Left ventricle myocardium superior (tissue), 1 donor: ENCODE measurements at regions of chr15 and their contacts with region 1.

Region 1: DNA sequence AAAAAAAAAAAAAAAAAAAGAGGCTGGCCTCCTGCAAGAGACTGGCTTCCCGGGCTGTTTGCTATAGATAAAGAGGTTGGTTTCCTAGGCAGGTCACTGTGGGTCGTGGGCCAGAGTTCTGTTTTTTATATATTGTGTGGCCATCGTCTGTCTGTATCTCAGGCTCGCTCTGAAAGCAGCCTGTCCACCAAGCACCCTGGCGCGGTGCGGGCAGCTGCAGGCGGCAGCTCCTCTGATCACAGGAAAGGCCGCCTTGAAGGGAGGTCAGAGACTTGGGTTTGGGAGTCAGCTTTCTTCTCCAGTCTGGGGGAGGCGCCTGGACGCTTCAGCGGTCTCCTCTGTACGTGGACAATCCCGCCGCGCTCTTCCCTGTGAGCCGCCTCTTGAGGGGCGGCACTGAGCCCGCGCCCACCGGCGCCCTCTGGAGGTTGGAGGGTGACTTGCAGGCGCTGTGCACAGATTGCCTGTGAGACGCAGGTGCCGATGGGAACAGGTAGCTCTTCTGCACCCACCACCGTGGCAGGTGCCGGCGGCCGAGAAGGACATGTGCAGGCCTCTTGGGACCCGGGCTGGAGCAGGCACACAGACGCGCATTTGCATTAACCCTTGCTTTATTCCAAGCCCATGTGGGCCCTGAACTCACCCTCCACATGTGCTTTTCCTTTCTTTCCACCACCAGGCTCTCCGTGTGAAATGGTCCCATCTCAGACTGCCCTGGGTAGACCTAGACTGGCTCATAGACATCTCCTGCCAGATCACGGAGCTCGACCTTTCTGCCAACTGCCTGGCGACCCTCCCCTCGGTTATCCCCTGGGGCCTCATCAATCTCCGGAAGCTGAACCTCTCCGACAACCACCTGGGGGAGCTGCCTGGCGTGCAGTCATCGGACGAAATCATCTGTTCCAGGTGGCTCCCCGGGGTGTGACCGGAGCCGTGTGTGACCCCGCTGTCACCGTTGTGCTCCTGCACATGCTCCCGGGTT is 89.3 kb downstream of the LRRK1 start:
- DNase-seq: peak; percentile 88
- ATAC-seq: peak; percentile 88

Region 2: DNA sequence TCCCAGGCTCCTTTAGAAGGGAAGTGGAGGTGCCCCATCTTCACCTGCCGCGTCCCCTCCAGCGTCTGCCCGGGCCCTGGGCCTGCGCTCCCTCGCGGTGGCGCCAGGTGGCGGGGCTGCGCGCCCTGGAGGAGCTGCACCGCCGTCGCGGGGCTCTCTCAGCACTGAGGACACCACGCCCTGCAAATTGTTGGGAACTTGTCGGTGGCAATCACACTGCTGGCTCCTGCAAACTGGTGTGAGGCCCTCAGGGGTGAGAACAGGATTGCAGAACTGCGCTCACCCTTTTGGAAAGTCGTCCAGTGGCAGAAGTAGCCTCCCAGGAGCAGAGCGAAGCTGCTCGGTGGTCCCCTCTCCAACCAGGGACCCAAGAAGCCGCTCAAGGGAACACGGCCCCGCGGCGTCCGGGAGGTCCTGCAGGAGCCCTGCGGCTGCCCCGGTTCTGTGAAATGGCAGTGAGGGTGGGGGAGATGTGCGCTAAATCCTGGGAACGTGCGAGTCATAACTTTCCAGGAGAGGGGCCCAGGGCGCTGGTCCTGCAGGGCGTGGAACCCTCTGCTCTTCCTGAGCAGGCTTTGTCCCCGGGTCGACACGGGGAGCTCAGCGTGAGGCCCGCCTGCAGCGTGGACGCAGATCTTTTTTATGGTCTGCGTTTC is 90.3 kb before region 1 on chr15:
- intact Hi-C with region 1: loop called (anchors 5 kb)
- DNase-seq: peak; percentile 88
- ATAC-seq: peak; percentile 93

Region 3: GRCh38 chr15:101070502-101071273 is 62.2 kb after region 1 on chr15:
- intact Hi-C with region 1: no loop called
- DNase-seq: no peak
- ATAC-seq: peak; percentile 87

Region 4: DNA sequence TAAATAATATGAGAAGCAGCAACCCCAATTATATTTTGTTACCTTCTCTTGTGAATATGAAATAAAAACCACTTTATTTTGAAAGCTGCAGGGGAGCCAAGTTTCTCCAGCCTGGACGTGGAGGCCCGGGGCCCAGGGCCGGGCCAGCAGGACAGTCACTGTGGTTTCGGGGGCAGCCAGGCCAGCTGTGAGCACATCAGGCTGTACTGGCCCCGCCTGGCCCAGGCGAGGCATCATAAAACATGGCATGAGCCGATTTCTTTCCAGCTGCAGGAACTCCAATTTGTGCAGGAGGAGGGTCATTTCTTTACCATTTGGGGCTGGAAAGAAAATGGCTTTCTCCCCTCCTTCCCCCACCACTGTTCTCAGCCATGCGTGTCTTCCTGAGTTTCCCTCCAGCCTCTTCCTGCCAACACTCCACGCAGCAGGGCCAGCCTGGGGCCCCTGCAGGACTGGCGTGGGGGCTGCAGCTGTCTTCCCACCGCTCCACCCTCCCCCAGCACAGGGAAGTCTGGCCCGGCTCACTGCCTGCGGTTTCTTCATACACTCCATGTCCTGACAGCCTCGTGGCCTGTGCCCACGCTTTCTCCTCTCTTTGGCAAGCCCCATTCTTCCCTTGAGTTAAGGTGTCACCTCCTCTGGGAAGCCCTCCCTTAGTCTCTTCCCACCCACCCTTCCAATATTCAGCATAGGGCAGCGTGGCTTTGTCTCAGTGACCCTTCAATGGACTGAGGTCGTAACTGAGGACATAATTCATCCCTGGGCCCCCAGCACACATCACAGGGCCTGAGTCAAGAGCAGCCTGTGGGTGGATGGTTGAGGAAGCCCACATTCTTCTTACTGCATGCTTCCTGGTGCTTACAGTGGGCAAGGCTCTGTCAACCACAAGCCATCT is 107.6 kb after region 1 on chr15:
- intact Hi-C with region 1: no loop called
- DNase-seq: peak; percentile 72
- ATAC-seq: peak; percentile 79